Naive thymus-derived CD4-positive, alpha-beta T cell (primary cell): ENCODE measurements at regions of chr9 and their contacts with region 1.

Region 1: GRCh38 chr9:131668439-131669268 is 71.2 kb downstream of the RAPGEF1 start:
- DNase-seq: peak; percentile 24 to 72 (median 49)
- ATAC-seq: peak; percentile 81
- H3K4me3 ChIP-seq: peak overlapping the region; percentile 1
- H3K4me3 Mint-ChIP-seq: peak overlapping the region; percentile 66 to 87 (median 78)
- H3K27ac ChIP-seq: peak overlapping the region; percentile 68
- H3K27ac Mint-ChIP-seq: peak overlapping the region; percentile 86 to 98 (median 94)
- H3K4me1 ChIP-seq: peaks cover 59 to 77% of the 10 kb centered on the region in 2 donors
- H3K4me1 Mint-ChIP-seq: peaks cover 51 to 93% (median 83%) of the 10 kb centered on the region in 7 donors
- H3K27me3 ChIP-seq: no peaks in the 10 kb centered on the region
- H3K27me3 Mint-ChIP-seq: no peaks in the 10 kb centered on the region

Region 2: DNA sequence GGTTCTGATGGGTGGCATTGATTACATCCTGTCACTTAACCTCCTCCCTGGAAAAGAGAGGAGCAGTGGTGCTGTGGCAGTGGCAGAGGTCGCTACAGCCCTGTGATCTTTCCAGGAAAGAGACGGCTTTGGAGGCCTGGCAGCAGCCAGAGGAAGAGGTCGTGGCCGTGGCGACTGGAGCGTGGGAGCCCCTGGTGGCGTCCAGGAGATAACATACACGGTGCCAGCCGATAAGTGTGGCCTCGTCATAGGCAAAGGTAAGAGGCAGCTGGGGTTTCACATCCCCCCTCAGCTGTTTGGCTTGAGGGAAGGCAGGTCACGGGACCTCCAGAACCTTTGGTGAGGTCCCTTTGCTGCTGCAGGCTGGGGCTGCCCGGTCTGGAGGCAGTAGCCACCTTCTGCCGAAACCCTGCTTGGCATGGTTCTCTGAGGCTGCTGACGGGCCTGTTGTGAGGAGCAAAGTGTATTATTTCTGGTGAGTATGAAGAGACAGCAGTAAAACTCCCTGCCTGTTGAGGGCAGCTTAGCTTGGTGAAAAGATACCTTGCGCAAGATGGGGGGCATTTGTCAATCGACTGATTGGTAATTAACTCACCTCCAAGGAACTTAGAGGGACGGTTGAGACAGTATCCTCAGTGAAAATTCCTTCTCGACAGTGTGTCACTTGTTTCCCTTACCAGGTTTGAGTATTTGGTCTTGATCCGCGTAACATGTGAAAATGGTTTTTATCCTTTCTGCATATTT is 1042.2 kb before region 1 on chr9:
- CTCF ChIA-PET with region 1: no interaction called
- POLR2A ChIA-PET with region 1: no interaction called
- intact Hi-C with region 1: no loop called
- DNase-seq: no peak
- ATAC-seq: no peak
- H3K4me3 ChIP-seq: no peak overlapping the region
- H3K4me3 Mint-ChIP-seq: no peak overlapping the region
- H3K27ac ChIP-seq: no peak overlapping the region
- H3K27ac Mint-ChIP-seq: peak overlapping the region in 1 of 9 donors; percentile 52
- H3K4me1 ChIP-seq: no peaks in the 10 kb centered on the region
- H3K4me1 Mint-ChIP-seq: no peaks in the 10 kb centered on the region
- H3K27me3 ChIP-seq: no peaks in the 10 kb centered on the region
- H3K27me3 Mint-ChIP-seq: no peaks in the 10 kb centered on the region

Region 3: DNA sequence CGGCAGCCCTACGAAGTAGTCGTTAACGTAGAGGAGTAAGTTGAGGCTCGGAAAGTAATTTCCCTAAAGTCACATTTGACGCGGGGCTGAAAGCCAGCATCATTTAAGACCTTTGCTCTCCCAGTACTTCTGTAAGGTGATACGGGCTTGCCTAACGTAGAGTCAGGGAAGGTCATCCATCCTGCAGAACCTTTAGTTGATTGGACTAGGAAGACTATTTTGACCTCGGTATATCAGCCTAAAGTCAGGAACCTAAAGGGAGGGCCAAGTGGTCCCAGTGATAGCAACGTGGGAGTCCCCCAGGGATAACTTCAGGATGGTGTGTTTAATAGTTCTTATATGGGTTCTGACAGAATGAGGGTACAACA is 542.6 kb before region 1 on chr9:
- CTCF ChIA-PET with region 1: no interaction called
- POLR2A ChIA-PET with region 1: no interaction called
- intact Hi-C with region 1: no loop called
- DNase-seq: no peak
- ATAC-seq: no peak
- H3K4me3 ChIP-seq: peak overlapping the region; percentile 96
- H3K4me3 Mint-ChIP-seq: peak overlapping the region; percentile 93 to 100 (median 99)
- H3K27ac ChIP-seq: peak overlapping the region; percentile 88
- H3K27ac Mint-ChIP-seq: peak overlapping the region; percentile 98 to 99 (median 99)
- H3K4me1 ChIP-seq: peaks cover 12 to 14% of the 10 kb centered on the region in 2 donors
- H3K4me1 Mint-ChIP-seq: peaks cover 12 to 46% (median 36%) of the 10 kb centered on the region in 7 donors
- H3K27me3 ChIP-seq: no peaks in the 10 kb centered on the region
- H3K27me3 Mint-ChIP-seq: peaks cover 0 to 5% (median 0%) of the 10 kb centered on the region in 5 donors

Region 4: GRCh38 chr9:131635285-131635684 is 33.4 kb before region 1 on chr9:
- CTCF ChIA-PET with region 1: interaction called, 4 read pairs
- POLR2A ChIA-PET with region 1: interaction called, 3 read pairs
- intact Hi-C with region 1: loop called in 1 of 2 experiments (anchors 2 kb)
- DNase-seq: peak; percentile 34 to 76 (median 60)
- ATAC-seq: peak; percentile 98
- H3K4me3 ChIP-seq: no peak overlapping the region
- H3K4me3 Mint-ChIP-seq: peak overlapping the region in 3 of 10 donors; percentile 5 to 50 (median 11)
- H3K27ac ChIP-seq: peak overlapping the region; percentile 36
- H3K27ac Mint-ChIP-seq: peak overlapping the region; percentile 70 to 89 (median 85)
- H3K4me1 ChIP-seq: peaks cover 12 to 20% of the 10 kb centered on the region in 2 donors
- H3K4me1 Mint-ChIP-seq: peaks cover 15 to 51% (median 19%) of the 10 kb centered on the region in 7 donors
- H3K27me3 ChIP-seq: no peaks in the 10 kb centered on the region
- H3K27me3 Mint-ChIP-seq: no peaks in the 10 kb centered on the region

Region 5: DNA sequence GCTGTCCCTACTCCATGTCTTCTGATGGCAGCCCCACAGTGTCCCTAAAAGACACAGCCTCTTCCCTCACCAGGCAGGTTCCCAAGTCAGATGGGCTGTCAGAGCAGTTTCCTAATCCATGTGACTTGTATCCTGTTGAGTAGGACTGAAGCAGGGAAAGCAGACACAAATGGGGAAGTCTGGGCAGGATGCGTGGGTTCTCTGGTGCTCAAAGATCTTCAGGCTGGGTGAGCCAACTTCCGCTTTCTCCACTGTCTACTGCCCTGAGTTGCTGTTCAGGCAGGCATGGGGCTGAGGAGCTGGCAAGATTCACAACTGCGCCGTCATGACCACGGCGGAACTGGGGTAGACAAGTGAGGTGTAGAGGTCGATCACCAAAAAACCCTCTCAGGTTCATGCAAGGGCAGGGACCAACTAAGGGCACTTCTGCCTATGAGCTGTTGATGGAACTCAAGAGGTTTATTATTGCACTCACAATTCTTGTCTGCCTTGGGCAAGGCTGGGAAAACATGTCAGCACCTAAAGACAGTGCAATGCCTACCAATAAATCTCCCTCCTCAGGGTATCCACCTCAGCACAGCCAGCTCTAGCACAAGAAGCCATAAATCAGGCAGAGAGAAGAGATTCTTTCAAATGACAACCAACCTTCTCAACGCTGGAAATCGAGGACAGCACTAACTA is 12.2 kb before region 1 on chr9:
- CTCF ChIA-PET with region 1: interaction called, 3 read pairs
- POLR2A ChIA-PET with region 1: no interaction called
- intact Hi-C with region 1: loop called (anchors 1 kb)
- DNase-seq: peak in 8 of 9 donors; percentile 40 to 70 (median 50)
- ATAC-seq: peak; percentile 93
- H3K4me3 ChIP-seq: no peak overlapping the region
- H3K4me3 Mint-ChIP-seq: peak overlapping the region; percentile 18 to 69 (median 61)
- H3K27ac ChIP-seq: peak overlapping the region; percentile 49
- H3K27ac Mint-ChIP-seq: peak overlapping the region; percentile 77 to 94 (median 88)
- H3K4me1 ChIP-seq: peaks cover 20 to 28% of the 10 kb centered on the region in 2 donors
- H3K4me1 Mint-ChIP-seq: peaks cover 56 to 88% (median 72%) of the 10 kb centered on the region in 7 donors
- H3K27me3 ChIP-seq: no peaks in the 10 kb centered on the region
- H3K27me3 Mint-ChIP-seq: no peaks in the 10 kb centered on the region

Region 6: DNA sequence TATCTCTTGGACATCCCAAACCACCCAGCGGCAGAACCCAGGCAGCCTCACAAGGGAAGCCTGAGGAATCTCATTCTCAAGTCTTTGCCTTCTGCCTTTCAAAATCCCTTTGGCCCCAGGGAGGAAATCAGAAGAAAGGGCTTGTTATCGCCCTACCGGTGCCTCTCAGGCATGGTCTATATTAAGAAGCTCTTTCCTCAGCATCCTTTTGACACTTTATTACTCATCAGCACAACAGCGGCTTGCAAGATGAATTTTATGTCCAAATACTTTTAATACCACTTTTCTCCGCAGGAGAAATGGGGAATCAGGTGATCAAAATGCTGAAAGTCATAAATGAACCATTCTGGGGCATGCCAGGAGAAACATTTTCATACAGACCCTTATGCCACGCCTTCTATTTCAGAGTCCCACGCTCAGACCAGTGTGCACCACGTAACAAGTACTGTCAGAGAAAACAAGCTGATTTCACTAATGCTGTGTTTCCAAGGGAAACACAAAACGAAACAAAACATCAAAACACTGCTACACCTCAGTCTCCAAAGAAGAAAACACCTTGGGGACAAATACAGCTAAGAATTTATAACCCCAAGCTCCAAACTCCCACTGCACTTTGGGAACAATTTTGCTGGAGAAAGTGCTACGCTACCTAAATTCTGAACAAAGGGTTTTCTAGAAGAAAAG is 41.3 kb after region 1 on chr9:
- CTCF ChIA-PET with region 1: no interaction called
- POLR2A ChIA-PET with region 1: no interaction called
- intact Hi-C with region 1: loop called in 1 of 2 experiments (anchors 5 kb)
- DNase-seq: peak in 7 of 9 donors; percentile 15 to 52 (median 34)
- ATAC-seq: peak; percentile 88
- H3K4me3 ChIP-seq: no peak overlapping the region
- H3K4me3 Mint-ChIP-seq: peak overlapping the region in 9 of 10 donors; percentile 10 to 71 (median 38)
- H3K27ac ChIP-seq: peak overlapping the region; percentile 42
- H3K27ac Mint-ChIP-seq: peak overlapping the region; percentile 51 to 99 (median 81)
- H3K4me1 ChIP-seq: peaks cover 19 to 34% of the 10 kb centered on the region in 2 donors
- H3K4me1 Mint-ChIP-seq: peaks cover 47 to 82% (median 71%) of the 10 kb centered on the region in 7 donors
- H3K27me3 ChIP-seq: no peaks in the 10 kb centered on the region
- H3K27me3 Mint-ChIP-seq: no peaks in the 10 kb centered on the region

Region 7: DNA sequence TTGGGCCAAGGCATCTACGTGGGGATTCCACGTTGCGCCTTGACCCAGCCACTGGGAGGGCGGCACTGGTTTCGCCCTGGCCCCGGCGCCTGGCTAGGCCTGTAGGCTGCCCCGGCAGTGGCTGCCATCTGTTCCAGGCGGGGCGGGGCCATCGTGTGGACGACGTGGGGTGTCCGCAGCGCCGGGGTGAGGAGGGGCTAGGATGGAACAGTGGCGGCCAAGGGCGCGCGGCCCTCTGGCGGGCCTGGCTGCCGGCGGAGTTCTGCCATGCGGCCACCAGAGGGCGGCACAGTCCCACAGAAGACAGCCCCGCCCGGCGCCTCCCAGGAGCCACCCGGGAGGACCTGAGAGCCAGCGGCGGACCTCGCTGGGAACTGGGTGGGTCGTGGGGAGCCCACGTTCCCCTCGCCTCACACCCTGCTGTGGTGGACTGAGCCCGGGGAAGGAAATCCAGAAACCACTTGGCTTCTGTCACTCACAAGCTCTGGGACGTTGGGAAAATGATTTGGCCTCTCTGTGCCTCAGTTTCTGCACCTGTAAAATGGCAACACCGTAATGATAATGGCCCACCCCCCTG is 93.8 kb after region 1 on chr9:
- CTCF ChIA-PET with region 1: no interaction called
- POLR2A ChIA-PET with region 1: no interaction called
- intact Hi-C with region 1: no loop called
- DNase-seq: peak; percentile 47 to 87 (median 68)
- ATAC-seq: peak; percentile 98
- H3K4me3 ChIP-seq: no peak overlapping the region
- H3K4me3 Mint-ChIP-seq: peak overlapping the region in 1 of 10 donors; percentile 19
- H3K27ac ChIP-seq: no peak overlapping the region
- H3K27ac Mint-ChIP-seq: no peak overlapping the region
- H3K4me1 ChIP-seq: no peaks in the 10 kb centered on the region
- H3K4me1 Mint-ChIP-seq: no peaks in the 10 kb centered on the region
- H3K27me3 ChIP-seq: no peaks in the 10 kb centered on the region
- H3K27me3 Mint-ChIP-seq: peaks cover 0 to 39% (median 9%) of the 10 kb centered on the region in 5 donors